Heart right ventricle (tissue), 16 donors: ENCODE measurements at regions of chr4 and their contacts with region 1.

Region 1: DNA sequence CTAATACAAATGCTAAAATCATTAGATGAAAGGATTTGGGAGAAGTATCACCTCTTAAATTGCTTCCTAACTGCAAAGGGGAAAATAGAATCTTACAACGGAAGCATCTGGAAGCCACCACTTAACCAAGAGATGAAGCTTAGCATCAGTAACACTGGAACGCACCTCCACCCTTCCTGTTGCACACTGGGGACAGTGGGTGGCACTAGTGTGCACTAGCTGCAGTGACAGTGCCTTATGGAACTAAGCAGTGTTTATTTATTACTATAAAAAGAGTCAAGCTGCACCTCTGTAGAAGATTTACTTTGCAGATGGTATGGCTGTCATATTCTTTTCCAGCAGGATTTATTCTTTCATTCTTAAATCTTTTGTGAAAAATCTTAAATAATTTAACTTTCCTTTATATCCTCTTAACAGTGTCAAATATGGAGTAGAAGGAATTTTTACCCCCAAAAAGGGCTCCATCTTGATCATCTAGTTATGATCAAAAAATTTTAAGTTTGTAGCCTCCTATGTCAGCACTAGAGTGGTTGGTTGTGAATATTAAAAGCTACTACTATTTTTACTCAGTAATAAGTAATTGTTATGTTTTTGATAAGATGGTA is 76.7 kb downstream of the SCD5 start:
- DNase-seq: peak in 1 of 2 donors; percentile 27
- ATAC-seq: peak in 7 of 8 donors; percentile 40 to 81 (median 68)
- H3K4me3 ChIP-seq: no peak overlapping the region
- H3K27ac ChIP-seq: no peak overlapping the region
- H3K4me1 ChIP-seq: peaks cover 0 to 28% (median 0%) of the 10 kb centered on the region in 9 donors
- H3K27me3 ChIP-seq: no peaks in the 10 kb centered on the region
- CTCF ChIP-seq: peak; percentile 27 to 76 (median 63)

Region 2: DNA sequence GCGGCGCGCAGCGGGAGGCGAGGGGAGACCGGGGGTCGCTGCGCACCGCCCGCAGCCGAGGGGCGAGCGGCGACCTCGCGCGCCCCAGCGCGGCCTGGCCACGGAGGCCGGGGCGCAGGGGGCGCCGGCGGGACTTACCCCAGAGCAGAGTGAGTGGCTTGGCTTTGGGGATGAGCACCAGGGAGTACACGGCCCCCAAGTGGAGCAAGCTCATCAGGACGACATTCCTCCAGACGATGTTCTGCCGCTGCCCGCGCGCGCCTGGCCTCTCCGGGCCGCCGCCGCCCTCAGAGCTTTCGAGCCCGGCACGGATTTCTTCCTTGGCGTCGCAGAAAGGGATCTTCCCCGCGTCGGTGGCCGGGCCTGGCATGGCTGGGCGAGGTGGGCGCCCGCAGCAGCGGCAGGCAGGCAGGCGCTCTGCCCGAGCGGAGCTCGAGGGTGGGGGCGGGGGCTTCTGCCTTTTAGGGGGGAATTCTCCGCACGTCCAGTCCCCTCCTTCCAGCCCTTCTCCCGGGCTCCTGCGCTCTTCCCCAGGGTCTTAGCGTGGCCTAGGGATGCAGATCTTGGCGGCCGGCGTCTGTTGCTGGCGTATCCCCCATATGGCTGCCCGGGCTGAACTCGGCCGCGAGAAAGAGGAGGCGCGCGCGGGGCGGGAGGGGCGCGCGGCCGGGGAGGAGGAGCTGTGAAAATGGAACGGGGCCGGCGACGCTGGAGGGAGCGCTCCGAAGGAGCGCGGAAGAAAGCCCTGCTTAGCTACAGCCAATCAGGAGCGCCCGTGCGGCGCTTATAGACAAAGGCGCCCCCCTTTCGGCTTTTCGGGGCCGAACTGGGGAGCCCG is 76.5 kb after region 1 on chr4 and contains the start of gene SCD5:
- intact Hi-C with region 1: loop called in 2 of 10 experiments (anchors 5 to 10 kb)
- DNase-seq: peak; percentile 67 to 75
- ATAC-seq: peak; percentile 87 to 95 (median 92)
- H3K4me3 ChIP-seq: peak within 1 kb of the TSS; percentile 47 to 86 (median 68)
- H3K27ac ChIP-seq: peak within 1 kb of the TSS in 6 of 10 donors; percentile 31 to 64 (median 52)
- H3K4me1 ChIP-seq: peaks cover 0 to 29% (median 20%) of the 10 kb centered on the region in 9 donors
- H3K27me3 ChIP-seq: peaks cover 0 to 50% (median 6%) of the 10 kb centered on the region in 7 donors
- CTCF ChIP-seq: peak in 1 of 9 donors; percentile 10
- total RNA-seq, gene SCD5: 1.7 to 5.0 (median 3.0) TPM

Region 3: GRCh38 chr4:82921795-82922194 is 199.9 kb after region 1 on chr4:
- intact Hi-C with region 1: no loop called
- DNase-seq: no peak
- ATAC-seq: no peak
- H3K4me3 ChIP-seq: no peak overlapping the region
- H3K27ac ChIP-seq: no peak overlapping the region
- H3K4me1 ChIP-seq: no peaks in the 10 kb centered on the region
- H3K27me3 ChIP-seq: no peaks in the 10 kb centered on the region
- CTCF ChIP-seq: no peak